ENCODE measurements at regions of chr7 and their contacts with region 1.

Region 1: DNA sequence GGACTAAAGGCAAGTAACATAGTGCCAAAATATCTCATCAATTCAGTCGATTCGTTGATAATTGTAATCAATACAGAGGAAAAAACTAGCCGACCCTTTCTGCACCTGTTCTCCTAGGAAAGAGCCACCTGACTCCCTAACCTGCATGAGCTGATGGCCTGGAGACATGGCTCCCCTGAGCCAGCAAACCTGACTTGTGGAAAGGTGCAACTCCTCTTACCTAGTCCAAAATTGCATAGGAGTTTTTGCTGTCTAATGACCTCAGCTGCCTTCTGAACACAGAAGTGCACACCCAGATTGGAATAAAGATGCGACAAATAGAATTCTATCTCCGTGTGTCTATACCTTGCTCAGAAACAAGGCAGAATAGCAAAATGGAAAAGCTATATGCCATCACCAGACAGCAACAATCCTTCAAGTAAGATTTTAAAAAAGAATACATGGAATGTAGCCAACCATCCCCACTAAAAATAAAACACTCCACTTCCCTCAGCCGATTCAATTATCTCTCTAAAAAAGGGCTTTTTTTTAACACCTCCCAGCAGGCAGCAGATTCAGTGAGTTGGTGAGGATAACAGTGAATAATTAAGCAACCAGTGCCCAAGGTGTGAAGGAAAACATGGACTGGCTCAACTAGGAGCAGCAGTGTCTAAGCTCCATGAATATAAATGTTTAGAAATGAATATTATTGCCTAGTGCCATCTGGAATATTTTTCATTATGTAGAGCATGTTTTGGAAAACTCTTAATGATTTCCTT is 26.6 kb upstream of the LMTK2 start:
- DNase-seq: no peak
- ATAC-seq: no peak

Region 2: DNA sequence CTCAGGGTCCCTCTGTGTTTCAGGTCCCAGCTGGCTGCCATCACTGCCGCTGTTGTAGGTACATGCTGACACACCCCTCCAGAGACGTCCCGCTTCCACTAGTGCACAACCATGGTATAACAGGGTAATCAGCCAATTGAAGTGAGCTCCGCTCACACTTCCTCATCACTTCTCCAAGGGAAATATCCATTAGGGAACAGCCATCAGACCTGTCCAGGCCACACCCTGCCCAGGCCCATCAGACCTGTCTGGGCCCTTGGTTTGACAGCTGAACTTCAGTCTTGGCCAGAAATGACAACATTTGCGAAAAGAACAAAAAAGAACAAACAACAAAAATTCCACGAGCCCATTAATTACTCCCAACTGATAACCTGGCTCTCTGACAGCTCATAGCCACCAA is 1181.6 kb after region 1 on chr7:
- intact Hi-C with region 1: loop called (anchors 5 kb)
- DNase-seq: no peak
- ATAC-seq: no peak

Measured in sciatic nerve (tissue), 2 donors.